RWPE1 (cell line): ENCODE measurements at regions of chr1 and their contacts with region 1.

Region 1: DNA sequence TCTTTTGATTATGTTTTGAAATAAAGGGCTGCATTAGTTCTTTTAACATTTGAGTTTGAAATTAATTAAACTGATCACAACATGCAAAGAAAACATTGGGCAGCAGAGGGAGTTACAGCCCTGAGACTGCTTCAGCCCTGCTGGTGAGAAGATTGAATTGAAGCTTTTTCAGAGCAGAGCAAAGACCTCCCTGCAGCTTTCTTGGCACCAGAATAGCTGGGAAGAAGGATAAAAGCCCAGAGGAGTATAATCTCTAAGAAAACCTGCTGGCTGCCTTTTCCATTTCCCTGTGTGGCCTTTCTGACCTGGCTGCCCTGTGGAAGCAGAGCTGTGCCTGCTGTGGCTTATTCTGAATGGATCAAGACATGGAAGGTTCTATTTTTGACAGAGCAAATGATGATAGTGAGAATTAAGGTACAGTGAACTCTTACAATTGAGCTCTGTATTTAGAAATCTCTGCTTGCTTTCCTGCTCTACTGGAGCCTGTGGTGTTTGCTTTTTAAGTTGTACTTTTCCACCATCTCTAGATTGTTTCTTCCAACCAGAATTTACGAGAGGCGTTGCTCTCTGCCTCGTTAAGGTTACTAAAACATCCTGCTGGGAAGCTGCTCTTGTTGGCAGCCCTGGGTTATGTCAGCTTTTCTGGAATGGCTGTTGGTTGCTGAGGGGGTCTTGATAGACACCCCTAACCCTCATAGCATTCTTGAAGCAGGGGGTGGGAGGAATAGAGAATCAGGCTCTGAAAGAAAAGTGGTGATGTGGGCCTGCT is 9.9 kb downstream of the SNRPE start:
- DNase-seq: peak; percentile 94
- H3K27ac ChIP-seq: no peak overlapping the region
- CTCF ChIP-seq: peak; percentile 79

Region 2: DNA sequence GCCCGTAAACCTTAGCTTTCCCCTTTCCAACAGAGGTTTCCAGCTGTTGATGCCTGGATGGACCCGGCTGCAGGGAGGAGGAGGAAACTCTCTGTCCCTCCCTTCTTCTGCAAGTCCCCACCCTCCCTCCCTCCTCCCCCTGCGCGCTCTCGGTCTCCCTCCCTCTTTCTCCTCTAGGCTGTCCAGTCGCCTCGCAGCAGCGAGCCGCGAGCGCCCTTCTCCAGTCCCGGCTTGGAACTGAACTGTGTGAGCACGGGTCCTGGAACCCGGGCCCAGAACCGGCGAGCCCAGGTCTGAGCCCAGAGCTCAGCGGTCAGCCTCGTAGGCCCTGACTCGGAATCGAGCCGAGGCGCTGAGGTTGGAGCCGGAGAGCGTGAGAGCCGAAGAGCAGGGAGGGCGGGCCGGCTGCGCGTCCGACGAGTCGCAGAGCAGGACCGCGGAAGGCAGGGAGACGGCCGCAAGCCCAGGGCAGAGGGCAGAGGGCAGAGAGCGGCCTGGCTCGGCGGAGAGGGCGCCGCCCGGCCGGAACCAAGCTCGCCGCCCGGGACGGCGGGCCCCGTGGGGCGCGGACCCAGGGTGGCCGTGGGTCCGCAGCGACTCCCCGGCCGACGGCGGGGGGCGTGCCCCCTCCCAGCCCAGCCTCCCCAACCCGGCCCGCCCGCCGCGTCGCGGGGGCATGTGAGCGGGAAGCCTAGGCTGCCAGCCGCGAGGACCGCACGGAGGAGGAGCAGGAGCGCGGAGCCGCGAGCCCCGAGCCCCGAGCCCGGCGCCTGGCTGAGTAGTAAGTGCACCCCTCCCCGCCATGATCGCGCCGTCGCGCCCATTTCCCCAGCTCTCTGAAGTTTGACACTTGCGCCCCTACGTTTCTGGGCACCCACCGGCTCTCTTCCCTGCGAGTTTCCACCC is 201.9 kb after region 1 on chr1 and contains the start of gene SOX13:
- CTCF ChIA-PET with region 1: interaction called, 41 read pairs
- POLR2A ChIA-PET with region 1: interaction called, 8 read pairs
- DNase-seq: peak; percentile 97
- H3K27ac ChIP-seq: peak within 1 kb of the TSS; percentile 85
- CTCF ChIP-seq: no peak

Region 3: GRCh38 chr1:204080163-204080903 is 209.0 kb after region 1 on chr1:
- CTCF ChIA-PET with region 1: interaction called, 41 read pairs
- POLR2A ChIA-PET with region 1: no interaction called
- DNase-seq: peak; percentile 100
- H3K27ac ChIP-seq: peak overlapping the region; percentile 91
- CTCF ChIP-seq: no peak

Region 4: GRCh38 chr1:204123376-204123775 is 252.1 kb after region 1 on chr1:
- CTCF ChIA-PET with region 1: interaction called, 163 read pairs
- POLR2A ChIA-PET with region 1: interaction called, 3 read pairs
- DNase-seq: no peak
- H3K27ac ChIP-seq: no peak overlapping the region
- CTCF ChIP-seq: no peak

Region 5: DNA sequence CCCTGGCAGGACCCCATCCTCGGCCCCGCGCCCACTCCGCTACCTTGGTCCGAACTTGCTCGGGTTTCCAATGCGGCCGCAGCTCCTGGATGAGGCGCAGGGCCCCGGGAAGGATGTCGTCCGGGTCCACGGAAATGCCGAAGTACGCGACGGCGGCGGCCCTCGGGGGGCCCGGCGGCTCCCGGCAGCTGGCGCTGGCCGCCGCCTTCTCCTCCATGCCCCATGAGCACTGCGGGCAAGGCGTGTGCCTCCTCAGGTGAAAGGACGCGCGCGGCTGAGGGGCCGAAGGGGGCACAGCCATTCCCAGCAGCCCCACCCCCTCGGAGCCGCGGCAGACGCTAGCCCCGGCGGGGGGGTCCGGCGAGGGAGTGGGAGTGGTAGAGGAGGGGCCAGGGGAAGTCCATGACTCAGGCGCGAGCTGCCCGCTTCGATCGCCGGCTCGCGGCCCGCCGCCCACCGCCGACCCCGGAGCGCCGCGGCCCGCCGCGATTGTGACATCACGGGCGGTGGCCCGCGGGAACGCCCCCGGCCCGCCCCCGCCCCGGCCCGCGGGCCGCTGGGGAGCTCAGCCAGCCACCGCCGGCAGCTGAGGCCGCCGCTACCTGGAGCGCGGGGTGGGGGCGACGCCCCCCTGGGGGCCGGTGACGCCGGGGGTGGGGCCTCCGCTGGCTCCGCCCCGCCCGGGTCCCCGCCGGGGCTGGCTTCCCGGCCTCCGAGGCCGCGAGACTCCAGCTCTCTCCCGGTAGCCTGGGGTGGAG is 280.4 kb after region 1 on chr1 and contains the start of gene ETNK2:
- CTCF ChIA-PET with region 1: interaction called, 17 read pairs
- POLR2A ChIA-PET with region 1: interaction called, 3 read pairs
- DNase-seq: peak; percentile 90
- H3K27ac ChIP-seq: peak within 1 kb of the TSS; percentile 77
- CTCF ChIP-seq: no peak